ENCODE measurements at regions of chr10 and their contacts with region 1.

Region 1: DNA sequence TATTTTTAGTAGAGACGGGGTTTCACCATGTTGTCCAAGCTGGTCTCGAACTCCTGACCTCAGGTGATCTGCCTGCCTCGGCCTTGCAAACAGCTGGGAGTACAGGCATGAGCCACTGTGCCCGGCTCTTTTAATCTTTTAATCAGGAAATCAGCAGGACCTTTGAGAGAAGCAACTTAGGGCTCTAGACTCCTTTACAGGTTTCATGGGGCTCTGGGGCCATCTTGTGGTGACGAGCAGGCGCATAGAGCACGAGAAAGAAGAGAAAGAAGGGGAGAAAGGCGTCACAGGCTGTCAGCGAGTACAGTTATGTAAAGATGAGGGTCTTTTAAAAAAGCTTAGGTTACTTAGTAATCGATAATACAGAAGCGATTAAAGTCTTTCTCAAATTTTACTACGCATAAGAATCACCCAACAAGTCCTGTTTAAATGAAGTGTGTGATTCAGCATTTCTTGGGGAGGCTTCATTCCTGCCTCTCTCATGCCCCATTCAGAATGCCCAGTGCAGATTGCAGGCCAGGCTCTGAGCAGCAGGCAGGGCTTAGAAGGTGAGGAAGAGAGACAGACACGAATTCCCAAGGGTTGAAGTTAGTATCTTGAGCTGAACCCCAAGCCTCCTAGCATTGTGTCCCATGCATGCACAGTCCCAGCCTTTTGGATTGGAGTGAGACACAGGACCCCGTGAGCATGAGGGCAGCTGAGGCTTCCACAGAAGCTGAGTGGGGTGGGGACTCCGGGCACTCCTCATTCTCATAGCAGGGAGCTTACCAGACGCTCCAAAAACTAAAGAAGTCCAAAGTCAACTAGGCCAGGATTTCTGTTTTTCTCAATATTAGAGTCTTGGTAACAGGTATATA is 23.6 kb upstream of the PFKP start:
- DNase-seq: no peak
- ATAC-seq: peak; percentile 85
- H3K4me3 ChIP-seq: no peak overlapping the region
- H3K27ac ChIP-seq: no peak overlapping the region
- H3K4me1 ChIP-seq: no peaks in the 10 kb centered on the region
- H3K27me3 ChIP-seq: 0 out of 4 replicates have a peak, but pooled peaks cover 0 to 2% of the 10 kb centered on the region in 2 experiments
- CTCF ChIP-seq: peak; percentile 73 to 87 (median 76)
- EP300 ChIP-seq: no peak
- POLR2A ChIP-seq: no peak
- RAD21 ChIP-seq: peak; percentile 97

Region 2: DNA sequence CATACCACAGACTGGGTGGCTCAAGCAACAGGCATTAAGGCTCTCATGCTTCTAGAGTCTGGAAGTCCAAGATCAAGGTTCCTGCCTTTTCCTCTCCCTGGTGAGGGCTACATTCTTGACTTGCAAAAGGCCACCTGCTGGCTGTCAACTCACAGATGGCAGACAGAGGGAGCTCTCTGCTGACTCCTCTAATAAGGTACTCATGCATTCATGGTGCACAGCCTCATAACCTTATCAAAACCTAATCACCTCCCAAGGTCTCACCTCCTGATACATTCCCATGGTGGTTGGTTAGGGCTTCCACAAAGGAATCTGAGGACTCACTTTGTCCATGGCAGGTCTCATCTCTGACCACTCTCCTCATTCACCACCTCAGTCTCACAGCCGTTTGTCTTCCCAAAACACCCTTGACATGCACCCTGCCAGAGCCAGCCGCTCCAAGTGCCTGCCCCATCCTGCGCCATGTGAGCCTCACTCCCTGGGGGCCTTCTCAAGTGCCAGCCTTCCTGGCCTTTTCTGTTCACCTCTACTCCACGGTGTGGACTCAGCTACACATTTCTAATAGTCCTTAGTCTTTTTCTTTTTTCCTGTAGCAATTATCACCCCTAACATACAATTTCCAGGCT is 906.1 kb before region 1 on chr10:
- CTCF ChIA-PET with region 1: no interaction called
- POLR2A ChIA-PET with region 1: no interaction called
- RAD21 ChIA-PET with region 1: no interaction called
- SMC1A ChIA-PET with region 1: no interaction called
- in situ Hi-C with region 1: no loop called
- intact Hi-C with region 1: loop called (anchors 5 kb)
- DNase-seq: no peak
- ATAC-seq: peak; percentile 70
- H3K4me3 ChIP-seq: no peak overlapping the region
- H3K27ac ChIP-seq: no peak overlapping the region
- H3K4me1 ChIP-seq: no peaks in the 10 kb centered on the region
- H3K27me3 ChIP-seq: no peaks in the 10 kb centered on the region
- CTCF ChIP-seq: peak; percentile 45 to 59 (median 45); a peak in 5 of 6 replicates
- EP300 ChIP-seq: no peak
- POLR2A ChIP-seq: no peak
- RAD21 ChIP-seq: no peak

Region 3: DNA sequence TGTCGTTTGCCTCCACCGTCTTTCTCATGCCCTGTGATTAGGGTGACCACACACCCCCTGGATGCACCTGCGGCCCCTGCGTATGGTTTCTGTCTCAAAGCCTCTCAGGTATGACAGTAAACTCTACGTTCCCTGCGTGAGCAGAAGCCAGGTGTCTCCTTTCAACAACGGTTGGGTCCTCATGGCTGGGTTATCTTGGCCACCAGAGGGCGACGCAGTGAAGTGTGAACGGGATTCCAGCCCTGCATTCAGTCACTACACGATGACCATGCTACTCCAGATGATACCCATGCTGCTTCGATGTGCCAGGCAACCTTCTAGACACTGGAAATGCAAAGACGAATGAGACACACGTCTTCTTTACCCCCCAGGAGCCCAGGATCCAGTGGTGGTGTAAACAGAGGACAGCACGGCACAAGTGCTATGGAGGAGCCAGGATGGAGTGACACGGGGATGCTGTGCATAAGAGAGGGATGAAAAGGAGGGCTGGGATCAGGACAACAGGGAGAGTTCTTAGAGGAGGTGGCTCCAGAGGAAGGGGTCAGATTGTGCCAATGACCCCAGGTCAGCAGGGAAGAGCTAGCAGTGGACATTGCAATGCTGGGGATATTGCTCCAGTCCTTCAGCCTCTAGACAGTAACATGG is 204.5 kb before region 1 on chr10:
- CTCF ChIA-PET with region 1: interaction called, 11 read pairs
- POLR2A ChIA-PET with region 1: no interaction called
- RAD21 ChIA-PET with region 1: no interaction called
- SMC1A ChIA-PET with region 1: interaction called, 3 read pairs
- in situ Hi-C with region 1: no loop called
- intact Hi-C with region 1: loop called (anchors 1 kb)
- DNase-seq: no peak
- ATAC-seq: peak; percentile 63
- H3K4me3 ChIP-seq: no peak overlapping the region
- H3K27ac ChIP-seq: no peak overlapping the region
- H3K4me1 ChIP-seq: no peaks in the 10 kb centered on the region
- H3K27me3 ChIP-seq: no peaks in the 10 kb centered on the region; a peak in 1 of 4 replicates
- CTCF ChIP-seq: peak; percentile 40 to 64 (median 62)
- EP300 ChIP-seq: no peak
- POLR2A ChIP-seq: no peak
- RAD21 ChIP-seq: peak; percentile 26; the same call in 1 of the 2 replicates

Region 4: GRCh38 chr10:2938869-2939268 is 104.9 kb before region 1 on chr10:
- CTCF ChIA-PET with region 1: interaction called, 14 read pairs
- POLR2A ChIA-PET with region 1: no interaction called
- RAD21 ChIA-PET with region 1: no interaction called
- SMC1A ChIA-PET with region 1: interaction called, 16 read pairs
- in situ Hi-C with region 1: no loop called
- intact Hi-C with region 1: no loop called
- DNase-seq: no peak
- ATAC-seq: no peak
- H3K4me3 ChIP-seq: no peak overlapping the region
- H3K27ac ChIP-seq: no peak overlapping the region
- H3K4me1 ChIP-seq: no peaks in the 10 kb centered on the region
- H3K27me3 ChIP-seq: peaks cover 0 to 3% of the 10 kb centered on the region in 2 experiments; a peak in 2 of 4 replicates
- CTCF ChIP-seq: no peak; a peak in 1 of 6 replicates
- EP300 ChIP-seq: no peak
- POLR2A ChIP-seq: no peak
- RAD21 ChIP-seq: peak; percentile 14; the same call in 1 of the 2 replicates

Region 5: GRCh38 chr10:3031490-3031889 is 12.2 kb before region 1 on chr10:
- CTCF ChIA-PET with region 1: interaction called, 10 read pairs
- POLR2A ChIA-PET with region 1: no interaction called
- RAD21 ChIA-PET with region 1: no interaction called
- SMC1A ChIA-PET with region 1: no interaction called
- in situ Hi-C with region 1: no loop called
- intact Hi-C with region 1: no loop called
- DNase-seq: no peak
- ATAC-seq: no peak
- H3K4me3 ChIP-seq: no peak overlapping the region
- H3K27ac ChIP-seq: no peak overlapping the region
- H3K4me1 ChIP-seq: peaks cover 2% of the 10 kb centered on the region; the same call in 1 of the 2 replicates
- H3K27me3 ChIP-seq: no peaks in the 10 kb centered on the region; a peak in 1 of 4 replicates
- CTCF ChIP-seq: no peak
- EP300 ChIP-seq: no peak
- POLR2A ChIP-seq: no peak
- RAD21 ChIP-seq: no peak

Measured in GM12878 (cell line).